ENCODE measurements at regions of chr11 and their contacts with region 1.

Region 1: DNA sequence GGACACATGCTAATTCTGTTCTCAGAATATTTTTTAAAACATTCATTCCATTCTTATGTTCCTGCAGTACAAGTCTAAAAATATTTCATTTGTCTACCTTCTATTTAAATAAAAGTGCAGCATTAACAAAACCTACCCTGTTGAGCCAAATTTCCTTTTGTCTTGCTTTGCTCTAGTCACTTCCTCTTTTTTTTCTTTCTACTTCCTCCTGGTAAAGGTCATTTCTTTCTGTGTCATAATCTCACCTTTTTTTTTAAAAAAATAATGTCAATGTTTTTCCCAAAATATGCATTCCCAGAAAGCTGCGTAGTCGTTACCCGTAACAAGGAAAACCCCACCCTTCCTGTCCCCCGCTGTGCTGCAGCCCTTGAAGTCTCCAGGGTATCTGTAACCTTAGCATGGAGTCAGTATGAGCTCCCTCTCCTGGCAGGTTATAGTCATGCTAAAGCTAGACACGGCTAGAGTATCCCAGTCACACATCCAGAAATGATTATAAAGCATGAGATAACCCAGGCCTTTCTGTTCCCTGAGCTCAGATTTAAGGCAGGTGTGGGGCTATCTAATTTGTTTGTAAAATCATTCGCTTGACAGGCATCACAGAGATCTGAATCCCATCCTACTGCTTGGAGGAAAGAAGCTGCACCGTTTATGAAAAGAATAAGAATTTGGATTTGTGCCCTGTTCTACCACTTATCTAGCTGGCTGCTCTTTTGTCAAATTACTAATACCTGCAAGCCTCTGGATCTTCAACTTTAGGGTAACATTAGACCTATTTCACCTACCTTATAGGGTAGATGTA is 51.1 kb upstream of the EED start:
- DNase-seq: peak; percentile 50 to 73
- ATAC-seq: peak; percentile 98 to 100 (median 99)
- H3K4me3 ChIP-seq: peak overlapping the region; percentile 48
- H3K27ac ChIP-seq: peak overlapping the region; percentile 21
- H3K4me1 ChIP-seq: peaks cover 16% of the 10 kb centered on the region
- H3K27me3 ChIP-seq: no peaks in the 10 kb centered on the region
- CTCF ChIP-seq: peak; percentile 83

Region 2: DNA sequence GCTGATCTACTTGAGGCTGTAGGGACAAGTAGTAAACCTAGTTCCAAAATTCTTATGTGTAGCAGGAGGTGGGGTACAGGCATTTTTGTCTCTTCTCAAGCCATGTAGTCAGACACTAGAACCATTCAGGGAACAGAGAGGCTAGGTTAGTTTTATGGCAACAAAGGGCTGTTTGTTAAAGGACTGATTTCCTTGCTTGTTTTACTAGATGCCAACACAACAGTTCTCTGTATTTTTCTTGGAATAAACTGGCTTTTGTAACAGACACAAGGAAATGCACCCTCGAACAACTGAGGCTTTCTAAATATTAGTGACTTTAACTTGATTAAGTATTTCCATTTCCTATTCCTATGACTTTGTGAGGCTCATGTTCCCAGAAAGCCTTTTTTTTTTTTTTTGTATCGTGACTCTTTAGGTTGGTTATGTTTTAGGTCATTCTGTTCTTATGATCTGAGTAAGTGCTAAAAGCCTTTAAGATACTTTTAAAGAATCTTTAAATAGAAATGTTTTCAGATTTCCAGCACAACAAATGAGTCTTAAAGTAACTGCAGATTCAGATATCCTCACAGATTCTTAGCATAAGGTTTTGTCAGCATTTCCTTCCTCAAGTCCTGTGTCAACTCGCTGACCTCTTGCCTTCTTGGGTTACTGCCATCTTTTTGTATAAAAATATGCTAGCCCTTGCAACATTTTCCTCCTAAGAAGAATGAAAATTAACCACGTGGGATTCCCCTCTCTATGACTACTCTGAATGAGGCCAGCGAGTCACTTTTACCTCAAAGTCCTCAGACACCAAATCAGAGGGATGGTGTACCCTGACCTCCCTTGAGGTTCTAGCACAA is 245.8 kb before region 1 on chr11:
- intact Hi-C with region 1: loop called in 1 of 2 experiments (anchors 5 kb)
- DNase-seq: no peak
- ATAC-seq: peak; percentile 43 to 69 (median 64)
- H3K4me3 ChIP-seq: no peak overlapping the region
- H3K27ac ChIP-seq: peak overlapping the region; percentile 61
- H3K4me1 ChIP-seq: peaks cover 8% of the 10 kb centered on the region
- H3K27me3 ChIP-seq: no peaks in the 10 kb centered on the region
- CTCF ChIP-seq: no peak

Region 3: DNA sequence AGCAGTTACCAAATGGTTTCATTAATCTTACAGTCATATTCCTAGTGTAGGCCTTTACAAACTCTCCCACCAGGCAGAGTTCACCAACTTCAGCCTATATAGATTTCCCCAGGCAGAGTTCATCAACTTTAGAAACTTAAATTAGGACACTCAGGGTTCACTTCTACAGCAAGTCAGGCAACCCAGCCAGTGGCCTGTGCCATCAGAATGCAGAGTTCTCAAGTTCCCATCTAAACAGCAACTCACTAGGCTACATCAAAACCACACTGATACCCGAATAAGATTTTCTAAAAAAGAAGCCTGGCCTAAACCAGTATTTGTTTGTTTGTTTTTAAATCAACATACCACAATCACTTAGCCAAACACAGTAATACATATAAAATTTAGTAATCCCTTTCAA is 158.3 kb before region 1 on chr11:
- intact Hi-C with region 1: loop called (anchors 2 to 10 kb)
- DNase-seq: peak in 1 of 2 donors; percentile 57
- ATAC-seq: peak; percentile 65 to 73 (median 69)
- H3K4me3 ChIP-seq: peak overlapping the region; percentile 18
- H3K27ac ChIP-seq: peak overlapping the region; percentile 76
- H3K4me1 ChIP-seq: peaks cover 66% of the 10 kb centered on the region
- H3K27me3 ChIP-seq: no peaks in the 10 kb centered on the region
- CTCF ChIP-seq: no peak

Region 4: GRCh38 chr11:86041975-86042378 is 151.5 kb before region 1 on chr11:
- intact Hi-C with region 1: loop called (anchors 2 to 10 kb)
- DNase-seq: no peak
- ATAC-seq: peak; percentile 77 to 84 (median 81)
- H3K4me3 ChIP-seq: peak overlapping the region; percentile 54
- H3K27ac ChIP-seq: peak overlapping the region; percentile 81
- H3K4me1 ChIP-seq: peaks cover 74% of the 10 kb centered on the region
- H3K27me3 ChIP-seq: no peaks in the 10 kb centered on the region
- CTCF ChIP-seq: peak; percentile 95

Region 5: GRCh38 chr11:86418917-86419316 is 225.4 kb after region 1 on chr11:
- intact Hi-C with region 1: no loop called
- DNase-seq: no peak
- ATAC-seq: peak in 1 of 4 donors; percentile 67
- H3K4me3 ChIP-seq: no peak overlapping the region
- H3K27ac ChIP-seq: no peak overlapping the region
- H3K4me1 ChIP-seq: no peaks in the 10 kb centered on the region
- H3K27me3 ChIP-seq: no peaks in the 10 kb centered on the region
- CTCF ChIP-seq: peak; percentile 11